Activated T-helper 2 cell treated with anti-CD3 and anti-CD28 coated beads, Interferon-gamma antibody, Interleukin-2, Interleukin-4, amounts not matched to agents 10 μg/mL and 5 μg/mL and 100 μg/mL, durations not matched to agents 14 hours and 24 hours and 36 hours (primary cell): ENCODE measurements at regions of chr3 and their contacts with region 1.

Region 1: DNA sequence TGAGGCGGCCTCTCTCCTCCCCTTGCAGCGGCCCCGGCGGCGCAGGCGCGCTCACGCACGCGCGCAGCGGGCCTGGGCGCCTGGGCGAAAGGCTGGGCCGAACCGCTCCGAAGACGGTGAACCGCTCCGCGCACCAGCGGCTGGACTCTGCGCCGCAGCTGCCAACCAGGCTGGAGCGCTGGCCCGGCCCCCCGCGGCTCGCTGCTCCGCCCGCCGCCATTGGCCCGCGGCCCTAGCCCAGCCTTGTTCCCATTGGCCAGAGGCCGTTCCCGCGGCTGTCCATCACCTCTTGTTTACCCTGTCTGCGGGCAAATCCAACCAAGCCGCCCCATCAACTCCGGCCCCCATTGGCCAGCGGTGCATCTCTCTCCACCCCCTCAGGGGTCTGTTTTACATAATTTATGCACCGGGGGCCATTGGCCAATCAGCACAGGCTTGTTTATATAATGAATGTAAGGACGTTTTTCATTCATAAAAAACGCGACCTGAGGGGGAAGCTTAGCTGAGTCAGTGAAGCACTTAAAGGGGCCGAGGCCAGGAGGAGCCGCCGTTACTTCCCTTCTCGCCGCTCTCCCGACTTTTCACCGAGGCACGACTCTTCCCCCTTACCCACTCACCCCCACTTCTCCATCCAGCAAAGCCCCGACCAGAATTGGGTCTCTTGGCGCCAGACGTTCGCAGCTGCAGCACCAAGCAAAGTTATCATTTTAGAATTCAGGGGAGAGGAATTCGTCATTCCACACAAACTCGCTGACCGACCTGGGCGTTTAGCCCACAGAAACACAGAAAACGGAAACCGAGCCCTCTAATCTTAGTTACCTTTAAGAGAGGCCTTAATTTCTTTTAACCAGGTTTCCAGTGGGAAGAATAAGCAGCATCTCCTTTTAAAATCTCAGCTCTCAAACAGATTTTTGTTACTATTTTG is at the start of gene ETV5:
- DNase-seq: peak; percentile 89
- H3K4me3 Mint-ChIP-seq: peak within 1 kb of the TSS; percentile 80
- H3K27ac Mint-ChIP-seq: no peak within 1 kb of the TSS
- H3K4me1 Mint-ChIP-seq: peaks cover 26% of the 10 kb centered on the region
- H3K27me3 Mint-ChIP-seq: peaks cover 81% of the 10 kb centered on the region
- total RNA-seq, gene ETV5: 0.85 and 1.3 TPM in 2 replicates

Region 2: DNA sequence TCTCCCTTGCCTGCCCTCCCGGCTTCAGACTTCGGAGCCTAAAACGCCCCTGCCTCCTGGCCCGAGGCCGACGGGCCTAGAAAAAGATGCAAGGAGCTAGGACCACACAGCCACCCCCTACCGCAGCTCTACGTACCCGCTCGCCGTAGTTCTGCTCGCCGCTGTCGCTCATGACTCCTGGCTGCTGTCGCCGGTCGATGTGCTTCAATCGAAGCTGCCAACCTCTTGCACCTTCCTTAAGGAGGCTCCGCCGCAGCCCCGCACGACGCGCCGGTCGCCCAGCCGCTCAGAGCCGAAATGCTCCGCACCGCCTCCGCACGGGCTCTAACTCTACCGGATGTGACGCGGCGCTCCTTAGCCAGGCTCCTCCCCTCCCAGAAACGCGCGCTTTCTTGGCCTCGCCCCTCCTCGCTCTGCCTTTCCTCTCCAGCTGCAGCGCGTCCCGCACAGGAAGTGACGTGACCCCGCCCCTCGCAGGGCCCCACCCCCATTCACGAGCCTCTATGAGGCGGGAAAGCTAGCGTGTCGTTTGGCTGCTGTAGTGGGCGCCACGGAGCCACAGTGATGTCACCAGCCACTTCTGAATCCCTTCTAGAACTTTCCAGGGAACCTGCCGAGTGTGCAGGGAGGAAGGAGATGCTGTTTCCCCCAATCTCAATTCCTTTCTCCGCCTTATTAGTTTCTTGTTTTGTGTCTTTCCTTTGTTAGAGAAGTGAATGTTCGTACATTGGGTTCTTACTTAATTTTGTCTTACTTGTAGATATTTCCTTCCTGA is 171.3 kb before region 1 on chr3 and contains the start of gene TRA2B:
- intact Hi-C with region 1: loop called (anchors 2 kb)
- DNase-seq: peak; percentile 98
- H3K4me3 Mint-ChIP-seq: peak within 1 kb of the TSS; percentile 98
- H3K27ac Mint-ChIP-seq: peak within 1 kb of the TSS; percentile 100
- H3K4me1 Mint-ChIP-seq: peaks cover 34% of the 10 kb centered on the region
- H3K27me3 Mint-ChIP-seq: peaks cover 13% of the 10 kb centered on the region
- total RNA-seq, gene TRA2B: 277 and 282 TPM in 2 replicates

Region 3: GRCh38 chr3:185968168-185968567 is 141.0 kb before region 1 on chr3:
- intact Hi-C with region 1: no loop called
- DNase-seq: no peak
- H3K4me3 Mint-ChIP-seq: no peak overlapping the region
- H3K27ac Mint-ChIP-seq: no peak overlapping the region
- H3K4me1 Mint-ChIP-seq: no peaks in the 10 kb centered on the region
- H3K27me3 Mint-ChIP-seq: peaks cover 28% of the 10 kb centered on the region

Region 4: GRCh38 chr3:186060222-186060621 is 49.0 kb before region 1 on chr3:
- intact Hi-C with region 1: loop called (anchors 1 kb)
- DNase-seq: peak; percentile 24
- H3K4me3 Mint-ChIP-seq: no peak overlapping the region
- H3K27ac Mint-ChIP-seq: no peak overlapping the region
- H3K4me1 Mint-ChIP-seq: peaks cover 12% of the 10 kb centered on the region
- H3K27me3 Mint-ChIP-seq: peaks cover 70% of the 10 kb centered on the region

Region 5: GRCh38 chr3:186259612-186260383 is 150.6 kb after region 1 on chr3:
- intact Hi-C with region 1: loop called (anchors 5 kb)
- DNase-seq: peak; percentile 27
- H3K4me3 Mint-ChIP-seq: peak overlapping the region; percentile 3
- H3K27ac Mint-ChIP-seq: peak overlapping the region; percentile 40
- H3K4me1 Mint-ChIP-seq: peaks cover 20% of the 10 kb centered on the region
- H3K27me3 Mint-ChIP-seq: peaks cover 5% of the 10 kb centered on the region